Spleen (tissue), 13 donors: ENCODE measurements at regions of chr5 and their contacts with region 1.

Region 1: DNA sequence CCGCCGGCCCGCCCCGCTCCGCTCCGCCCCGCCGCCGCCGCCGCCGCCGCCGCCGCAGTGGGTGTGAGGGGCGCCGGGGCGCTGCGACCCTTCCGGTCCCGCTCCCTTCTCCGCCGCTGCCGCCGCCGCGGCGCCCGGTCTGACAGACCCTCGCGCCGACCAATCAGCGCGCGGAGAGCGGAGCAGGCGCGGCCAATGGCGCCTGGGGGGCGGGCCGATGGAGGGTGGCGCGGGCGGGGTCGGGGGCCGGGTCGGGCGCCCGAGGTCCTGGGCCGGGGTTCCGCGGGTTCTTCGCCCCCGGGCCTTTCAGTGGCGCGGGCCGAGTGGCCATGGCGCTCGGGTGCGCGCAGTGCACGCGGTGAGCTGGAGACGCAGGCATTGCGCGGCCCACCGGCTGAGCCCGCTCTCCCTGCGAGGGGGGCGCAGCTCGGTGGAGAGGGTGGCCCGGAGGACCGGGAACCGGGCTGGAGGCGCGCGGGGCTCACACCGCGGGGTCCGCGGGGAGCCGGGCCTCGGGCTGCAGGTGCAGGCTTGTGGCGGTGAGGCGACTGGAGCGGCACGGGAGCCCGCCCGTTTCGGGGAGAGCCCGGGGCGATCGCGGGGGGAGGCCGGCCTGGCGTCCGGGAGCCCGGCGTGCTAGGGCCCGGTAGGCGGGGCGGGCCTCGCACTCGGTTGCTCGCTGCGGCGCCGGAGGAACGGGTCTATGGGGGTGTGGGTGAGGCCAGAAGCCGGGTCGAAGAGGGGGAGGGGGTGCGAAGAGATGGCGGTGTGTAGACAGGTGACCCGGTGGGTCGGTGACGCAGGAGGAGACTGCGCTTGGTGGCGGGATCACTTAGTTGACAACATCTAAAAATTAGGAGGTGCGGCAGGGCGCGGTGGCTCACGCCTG is at the start of gene MAPK9:
- DNase-seq: peak; percentile 96
- H3K4me3 ChIP-seq: peak within 1 kb of the TSS; percentile 86 to 100 (median 99)
- H3K27ac ChIP-seq: peak within 1 kb of the TSS; percentile 89 to 98 (median 94)
- H3K4me1 ChIP-seq: peaks cover 17 to 72% (median 33%) of the 10 kb centered on the region in 6 donors
- H3K27me3 ChIP-seq: no peaks in the 10 kb centered on the region
- CTCF ChIP-seq: peak in 1 of 11 experiments; percentile 26
- POLR2A ChIP-seq: no peak
- total RNA-seq, gene MAPK9: 30.7 to 38.5 (median 33.4) TPM

Region 2: DNA sequence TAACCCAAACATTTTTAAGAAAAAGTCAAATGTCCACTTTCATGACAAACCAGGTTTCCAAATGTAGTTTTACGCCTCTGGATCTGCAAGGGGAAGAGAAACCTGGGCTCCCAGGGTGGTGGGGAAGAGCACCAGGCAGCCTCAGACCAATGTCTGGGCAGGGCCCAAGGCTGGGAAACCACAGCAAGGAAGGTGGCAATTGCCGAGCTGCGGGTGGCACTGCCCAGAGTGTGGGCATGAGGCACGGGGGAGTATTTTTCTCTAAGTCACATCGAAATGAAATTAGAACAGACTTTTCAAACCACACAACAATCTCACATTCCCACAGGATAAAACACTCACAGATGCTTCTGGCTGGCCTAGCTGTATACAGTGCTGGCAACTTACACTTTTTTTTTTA is 50.6 kb before region 1 on chr5:
- intact Hi-C with region 1: no loop called
- DNase-seq: no peak
- H3K4me3 ChIP-seq: no peak overlapping the region
- H3K27ac ChIP-seq: no peak overlapping the region
- H3K4me1 ChIP-seq: no peaks in the 10 kb centered on the region
- H3K27me3 ChIP-seq: no peaks in the 10 kb centered on the region
- CTCF ChIP-seq: no peak
- POLR2A ChIP-seq: no peak

Region 3: DNA sequence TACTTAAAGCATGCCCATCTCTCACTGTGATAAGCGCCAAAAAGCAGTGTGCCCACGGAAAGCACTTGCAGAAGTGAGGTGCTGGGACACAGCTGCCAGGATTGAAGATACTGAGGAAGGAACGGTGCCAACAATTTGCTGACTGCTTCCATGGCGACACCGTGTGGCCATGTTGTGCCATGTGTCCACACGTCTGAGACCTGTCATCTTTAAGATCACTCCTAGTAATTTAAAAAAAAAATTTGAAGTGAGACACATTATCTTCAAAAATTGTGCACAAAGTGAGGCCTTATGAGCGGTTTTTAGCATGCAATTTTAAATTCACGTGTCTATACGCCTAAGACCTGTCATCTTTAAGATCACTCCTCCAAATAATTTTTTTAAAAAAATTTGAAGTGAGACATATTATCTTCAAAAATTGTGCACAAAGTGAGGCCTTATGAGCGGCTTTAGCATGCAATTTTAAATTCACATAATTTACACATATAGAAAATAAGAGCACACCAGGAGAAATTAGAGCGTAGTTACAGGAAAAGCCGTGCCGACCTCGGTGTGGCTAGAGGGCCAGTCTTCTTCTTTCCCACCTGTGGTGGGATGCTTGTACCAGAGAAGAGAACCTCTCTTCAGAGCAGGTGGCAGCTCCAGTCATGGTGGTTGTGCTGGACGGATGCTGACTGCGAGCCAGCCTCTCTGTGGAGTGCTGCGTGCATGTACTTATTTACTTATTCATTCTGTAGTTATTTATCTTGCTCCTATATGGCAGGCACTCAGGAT is 378.6 kb after region 1 on chr5:
- intact Hi-C with region 1: loop called (anchors 10 kb)
- DNase-seq: no peak
- H3K4me3 ChIP-seq: no peak overlapping the region
- H3K27ac ChIP-seq: no peak overlapping the region
- H3K4me1 ChIP-seq: peaks cover 0 to 20% (median 7%) of the 10 kb centered on the region in 6 donors
- H3K27me3 ChIP-seq: peaks cover 0 to 37% (median 18%) of the 10 kb centered on the region in 7 donors
- CTCF ChIP-seq: peak; percentile 31 to 72 (median 62)
- POLR2A ChIP-seq: no peak